PC-3 (cell line): ENCODE measurements at regions of chrX and their contacts with region 1.

Region 1: GRCh38 chrX:17590892-17591740 is 146.2 kb upstream of the SCML1 start:
- DNase-seq: peak; percentile 79
- ATAC-seq: peak; percentile 58
- H3K4me3 ChIP-seq: peak overlapping the region; percentile 51
- H3K27ac ChIP-seq: peak overlapping the region; percentile 55
- H3K4me1 ChIP-seq: peaks cover 43% of the 10 kb centered on the region
- H3K27me3 ChIP-seq: no peaks in the 10 kb centered on the region
- CTCF ChIP-seq: peak; percentile 87

Region 2: GRCh38 chrX:17160971-17161370 is 430.1 kb before region 1 on chrX:
- CTCF ChIA-PET with region 1: no interaction called
- POLR2A ChIA-PET with region 1: no interaction called
- intact Hi-C with region 1: loop called (anchors 2 kb)
- DNase-seq: peak; percentile 38
- ATAC-seq: no peak
- H3K4me3 ChIP-seq: no peak overlapping the region
- H3K27ac ChIP-seq: no peak overlapping the region
- H3K4me1 ChIP-seq: no peaks in the 10 kb centered on the region
- H3K27me3 ChIP-seq: no peaks in the 10 kb centered on the region
- CTCF ChIP-seq: peak; percentile 65

Region 3: DNA sequence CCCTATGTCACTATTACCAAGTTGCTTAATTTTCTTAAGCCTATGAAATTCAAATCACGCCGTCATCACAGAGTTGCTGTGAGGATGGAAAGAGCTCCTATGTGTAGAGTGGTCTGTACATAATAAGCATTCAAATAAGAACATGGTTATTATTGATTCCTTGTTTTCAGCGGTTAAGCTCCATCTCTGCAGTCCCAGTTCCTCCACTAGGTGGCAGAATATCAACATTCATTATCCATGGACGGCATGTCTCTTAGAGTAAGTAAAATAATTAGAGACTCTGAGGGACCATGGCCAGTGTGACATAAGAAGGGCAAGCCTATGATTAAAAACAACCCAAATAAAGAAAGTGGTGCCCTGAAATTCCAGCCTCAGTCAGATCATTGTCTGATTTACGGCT is 348.6 kb before region 1 on chrX:
- CTCF ChIA-PET with region 1: interaction called, 5 read pairs
- POLR2A ChIA-PET with region 1: no interaction called
- intact Hi-C with region 1: loop called (anchors 1 kb)
- DNase-seq: peak; percentile 78
- ATAC-seq: peak; percentile 78
- H3K4me3 ChIP-seq: no peak overlapping the region
- H3K27ac ChIP-seq: no peak overlapping the region
- H3K4me1 ChIP-seq: no peaks in the 10 kb centered on the region
- H3K27me3 ChIP-seq: no peaks in the 10 kb centered on the region
- CTCF ChIP-seq: peak; percentile 83

Region 4: GRCh38 chrX:17374619-17375366 is 216.3 kb before region 1 on chrX and contains the start of gene NHS:
- CTCF ChIA-PET with region 1: interaction called, 3 read pairs
- POLR2A ChIA-PET with region 1: no interaction called
- intact Hi-C with region 1: loop called (anchors 2 kb)
- DNase-seq: peak; percentile 83
- ATAC-seq: peak; percentile 57
- H3K4me3 ChIP-seq: peak within 1 kb of the TSS; percentile 91
- H3K27ac ChIP-seq: peak within 1 kb of the TSS; percentile 26; the same call in 1 of the 2 replicates
- H3K4me1 ChIP-seq: peaks cover 14% of the 10 kb centered on the region
- H3K27me3 ChIP-seq: no peaks in the 10 kb centered on the region
- CTCF ChIP-seq: peak; percentile 57
- total RNA-seq, gene NHS: 4.9 and 5.6 TPM in 2 replicates

Region 5: GRCh38 chrX:17413228-17413627 is 177.9 kb before region 1 on chrX:
- CTCF ChIA-PET with region 1: interaction called, 3 read pairs
- POLR2A ChIA-PET with region 1: no interaction called
- intact Hi-C with region 1: loop called (anchors 1 kb)
- DNase-seq: peak; percentile 45
- ATAC-seq: peak; percentile 23
- H3K4me3 ChIP-seq: peak overlapping the region; percentile 55
- H3K27ac ChIP-seq: peak overlapping the region; percentile 99
- H3K4me1 ChIP-seq: peaks cover 49% of the 10 kb centered on the region
- H3K27me3 ChIP-seq: no peaks in the 10 kb centered on the region
- CTCF ChIP-seq: no peak

Region 6: DNA sequence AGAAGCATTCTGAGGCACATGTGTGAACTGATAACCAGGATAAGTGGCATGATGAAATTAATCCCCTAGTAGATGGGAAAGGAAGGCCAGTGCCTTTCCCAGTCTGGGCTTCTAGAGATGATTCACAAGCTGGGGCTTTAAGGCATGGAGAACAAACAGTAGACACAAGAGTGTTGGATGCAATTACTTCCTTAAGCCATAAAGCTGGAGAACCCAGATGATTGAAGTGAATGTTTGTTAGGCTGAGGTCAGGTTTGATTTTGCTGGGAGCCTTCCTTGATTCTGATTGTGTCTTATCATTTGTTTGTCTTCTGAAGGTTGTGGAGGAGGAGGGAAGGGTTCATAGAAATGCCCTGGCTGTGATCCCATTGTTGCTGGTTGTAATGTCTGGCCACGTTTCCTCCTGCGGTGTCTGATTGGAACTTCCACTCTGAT is 91.0 kb before region 1 on chrX:
- CTCF ChIA-PET with region 1: no interaction called
- POLR2A ChIA-PET with region 1: no interaction called
- intact Hi-C with region 1: loop called (anchors 1 kb)
- DNase-seq: peak; percentile 78
- ATAC-seq: peak; percentile 63
- H3K4me3 ChIP-seq: no peak overlapping the region
- H3K27ac ChIP-seq: peak overlapping the region; percentile 92
- H3K4me1 ChIP-seq: peaks cover 43% of the 10 kb centered on the region
- H3K27me3 ChIP-seq: no peaks in the 10 kb centered on the region
- CTCF ChIP-seq: no peak

Region 7: DNA sequence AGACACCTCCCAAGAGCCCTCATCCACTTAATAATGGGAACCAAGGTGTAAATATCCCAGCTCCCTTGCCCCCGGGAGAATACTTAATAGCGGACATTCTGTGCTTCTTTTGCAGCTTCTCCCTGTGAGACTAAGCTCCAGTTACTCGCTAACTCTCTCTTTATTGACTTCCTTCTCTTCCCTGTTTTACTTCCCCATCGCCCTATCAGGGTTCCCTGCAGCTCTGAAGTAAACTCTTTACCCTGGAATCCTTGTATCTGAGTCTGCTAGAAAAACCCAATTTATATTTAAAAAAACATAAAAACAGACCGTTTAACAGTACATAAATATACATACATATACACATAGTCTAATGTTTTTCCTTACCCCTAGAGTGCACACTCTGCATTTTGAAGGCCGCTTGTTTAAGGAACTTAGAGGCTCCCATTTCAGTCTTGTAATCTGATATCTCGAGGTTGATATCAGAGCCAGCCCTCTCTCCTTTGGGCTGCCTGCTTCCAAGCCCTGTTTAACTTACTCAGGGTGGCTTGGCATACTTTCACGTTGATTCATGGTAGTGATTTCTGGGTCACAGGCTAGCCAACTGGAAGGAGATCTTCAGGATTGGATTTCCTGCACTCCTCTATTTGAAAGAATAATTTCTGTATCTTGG is 31.3 kb before region 1 on chrX:
- CTCF ChIA-PET with region 1: no interaction called
- POLR2A ChIA-PET with region 1: interaction called, 5 read pairs
- intact Hi-C with region 1: loop called (anchors 2 kb)
- DNase-seq: peak; percentile 91
- ATAC-seq: peak; percentile 97
- H3K4me3 ChIP-seq: peak overlapping the region; percentile 23; the same call in 1 of the 2 replicates
- H3K27ac ChIP-seq: peak overlapping the region; percentile 81
- H3K4me1 ChIP-seq: peaks cover 26% of the 10 kb centered on the region
- H3K27me3 ChIP-seq: no peaks in the 10 kb centered on the region
- CTCF ChIP-seq: peak; percentile 31; the same call in 1 of the 2 replicates